Mammary epithelial cell (primary cell): ENCODE measurements at regions of chr1 and their contacts with region 1.

Region 1: DNA sequence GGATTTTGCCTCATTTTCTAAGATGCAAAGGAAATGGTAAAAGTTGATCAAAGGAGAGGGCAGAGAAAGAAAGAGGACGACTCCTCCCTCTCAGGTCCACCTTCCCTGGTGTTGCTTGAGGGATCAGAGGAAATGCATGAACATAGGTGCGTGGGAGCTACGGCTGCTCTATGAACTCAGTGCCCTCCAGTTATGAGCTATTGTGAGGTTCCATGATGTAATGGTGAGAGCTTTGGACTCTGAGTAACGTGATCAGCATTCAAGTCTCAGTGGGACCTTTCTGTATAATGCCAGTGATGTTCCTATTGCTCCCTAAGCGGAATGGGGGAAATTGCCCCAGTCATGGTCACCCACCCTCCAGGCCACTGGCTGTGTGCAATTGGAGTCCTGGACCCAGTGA is 25.9 kb upstream of the NBPF3 start:
- DNase-seq: no peak
- H3K4me3 ChIP-seq: no peak overlapping the region
- H3K27ac ChIP-seq: no peak overlapping the region
- H3K4me1 ChIP-seq: no peaks in the 10 kb centered on the region
- H3K27me3 ChIP-seq: no peaks in the 10 kb centered on the region
- CTCF ChIP-seq: no peak

Region 2: DNA sequence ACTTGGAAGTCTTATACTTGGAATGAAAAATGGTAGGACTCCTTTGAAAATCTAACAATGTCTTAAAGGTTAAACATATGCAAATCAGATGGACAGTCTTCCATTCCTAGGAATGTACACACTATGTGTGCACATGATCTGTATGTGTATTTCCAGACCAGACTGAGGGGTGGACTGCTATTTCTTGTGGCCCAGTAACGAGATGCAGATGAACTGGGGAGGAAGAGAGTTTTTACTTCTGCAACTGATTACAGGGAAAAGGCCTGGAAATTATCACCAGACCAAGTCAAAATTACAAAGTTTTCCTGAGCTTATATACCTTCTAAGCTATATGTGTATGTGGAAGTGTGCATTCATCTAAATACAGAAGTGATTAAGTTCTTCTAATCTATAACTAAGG is 43.6 kb after region 1 on chr1:
- CTCF ChIA-PET with region 1: no interaction called
- dilution Hi-C with region 1: no loop called
- in situ Hi-C with region 1: no loop called
- intact Hi-C with region 1: no loop called
- DNase-seq: no peak
- H3K4me3 ChIP-seq: no peak overlapping the region
- H3K27ac ChIP-seq: no peak overlapping the region
- H3K4me1 ChIP-seq: peaks cover 8% of the 10 kb centered on the region
- H3K27me3 ChIP-seq: no peaks in the 10 kb centered on the region
- CTCF ChIP-seq: no peak

Region 3: DNA sequence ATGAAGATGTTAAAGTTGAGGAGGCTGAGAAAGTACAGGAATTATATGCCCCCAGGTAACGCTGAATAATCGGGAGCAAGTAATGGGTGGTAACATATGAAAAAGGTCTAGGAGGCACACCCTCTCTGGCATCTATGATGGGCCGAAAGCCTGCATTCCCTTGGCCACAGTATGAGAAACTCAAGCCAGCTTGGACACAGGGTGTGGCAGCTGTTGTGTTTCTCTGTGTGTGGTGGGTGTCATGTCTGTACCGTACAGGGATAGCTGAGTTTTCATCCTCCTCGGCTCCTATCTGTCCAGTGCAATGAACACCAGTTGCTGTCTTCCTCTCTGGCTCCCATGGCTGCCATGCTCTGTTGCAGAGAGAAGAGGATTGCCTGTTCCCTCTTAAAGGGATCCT is 58.8 kb after region 1 on chr1:
- CTCF ChIA-PET with region 1: no interaction called
- dilution Hi-C with region 1: loop called (anchors 10 kb)
- in situ Hi-C with region 1: no loop called
- intact Hi-C with region 1: no loop called
- DNase-seq: no peak
- H3K4me3 ChIP-seq: no peak overlapping the region
- H3K27ac ChIP-seq: no peak overlapping the region
- H3K4me1 ChIP-seq: no peaks in the 10 kb centered on the region
- H3K27me3 ChIP-seq: no peaks in the 10 kb centered on the region
- CTCF ChIP-seq: no peak

Region 4: DNA sequence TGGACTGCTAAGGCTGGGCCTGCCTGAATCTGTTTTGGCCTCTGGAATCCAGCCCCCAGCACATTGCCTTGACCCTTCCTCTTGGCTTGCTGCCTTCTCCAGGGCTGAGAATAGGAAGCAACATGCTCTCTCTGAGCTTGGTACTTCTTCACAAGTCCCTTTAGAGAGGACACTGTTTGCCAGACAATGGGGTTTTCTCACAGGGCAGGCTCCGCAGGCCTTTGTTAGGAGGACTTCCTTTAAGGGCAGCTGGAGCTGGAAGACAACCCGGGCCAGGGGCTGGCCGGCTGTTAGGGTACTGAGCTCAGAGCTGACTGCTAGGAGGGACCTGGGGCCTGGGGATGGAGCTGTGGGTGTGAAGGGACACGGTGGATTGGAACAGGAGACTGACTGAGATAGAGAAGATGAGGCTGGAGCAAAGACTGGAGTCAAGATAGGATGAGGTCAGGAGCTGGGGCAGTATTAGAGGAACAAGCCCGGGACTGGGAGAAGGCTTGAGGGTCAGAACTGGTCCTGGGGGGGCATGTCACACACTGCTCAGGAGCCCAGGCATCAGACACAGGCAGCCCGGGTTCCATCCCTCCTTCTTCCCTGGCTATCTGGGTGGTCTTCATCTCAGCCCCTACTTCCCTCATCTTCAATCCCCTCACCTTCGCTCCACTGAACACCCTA is 89.8 kb after region 1 on chr1:
- CTCF ChIA-PET with region 1: no interaction called
- dilution Hi-C with region 1: no loop called
- in situ Hi-C with region 1: no loop called
- intact Hi-C with region 1: no loop called
- DNase-seq: no peak
- H3K4me3 ChIP-seq: no peak overlapping the region
- H3K27ac ChIP-seq: no peak overlapping the region
- H3K4me1 ChIP-seq: peaks cover 3% of the 10 kb centered on the region
- H3K27me3 ChIP-seq: peaks cover 5% of the 10 kb centered on the region
- CTCF ChIP-seq: no peak